A549 (cell line): ENCODE measurements at regions of chr2 and their contacts with region 1.

Region 1: GRCh38 chr2:110157153-110157793 is 41.7 kb upstream of the MALL start:
- DNase-seq: peak; percentile 42 to 80
- ATAC-seq: peak; percentile 87 to 96
- H3K4me3 ChIP-seq: no peak overlapping the region
- H3K27ac ChIP-seq: peak overlapping the region; percentile 41 to 74; a peak in 5 of 6 replicates
- H3K4me1 ChIP-seq: peaks cover 5% of the 10 kb centered on the region; the same call in 1 of the 3 replicates
- CTCF ChIP-seq: peak; percentile 94
- EP300 ChIP-seq: no peak
- POLR2A ChIP-seq: no peak
- RAD21 ChIP-seq: peak; percentile 96 to 97

Region 2: DNA sequence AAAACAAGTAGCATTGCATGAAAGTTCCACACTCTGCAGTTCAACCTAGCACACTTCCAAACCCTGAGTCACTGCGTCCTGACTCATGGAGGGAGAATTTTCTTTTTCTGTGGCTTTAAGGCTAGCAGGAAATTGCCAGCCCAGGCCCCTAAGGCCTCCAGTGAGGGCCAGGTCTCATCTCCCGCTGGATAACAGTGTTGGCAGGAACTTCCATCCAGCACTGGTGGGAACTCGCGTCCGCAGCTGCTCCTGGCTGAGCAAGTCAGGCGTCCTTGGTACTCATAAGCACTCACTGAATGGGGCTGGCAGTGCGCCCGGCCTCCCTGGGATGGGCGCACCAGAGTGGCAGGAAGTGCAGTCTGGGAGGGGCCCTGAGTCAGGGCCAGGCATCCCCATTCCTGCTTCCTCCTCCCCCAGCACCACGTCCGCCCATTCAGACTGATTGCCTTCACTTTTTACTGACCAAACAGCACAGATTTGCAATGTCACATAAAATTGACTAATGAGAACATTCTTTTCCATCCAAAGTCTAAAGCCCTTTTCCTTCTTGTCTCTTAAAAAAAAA is 55.9 kb before region 1 on chr2:
- CTCF ChIA-PET with region 1: interaction called, 15 read pairs
- POLR2A ChIA-PET with region 1: no interaction called
- DNase-seq: peak; percentile 68 to 99
- ATAC-seq: peak; percentile 79 to 82
- H3K4me3 ChIP-seq: no peak overlapping the region
- H3K27ac ChIP-seq: peak overlapping the region; percentile 98 to 100
- H3K4me1 ChIP-seq: peaks cover 82% of the 10 kb centered on the region
- CTCF ChIP-seq: no peak
- EP300 ChIP-seq: peak; percentile 84 to 94; a peak in 4 of 5 replicates
- POLR2A ChIP-seq: peak; percentile 28; the same call in 1 of the 2 replicates
- RAD21 ChIP-seq: peak; percentile 3 to 44; a peak in 3 of 5 replicates

Region 3: DNA sequence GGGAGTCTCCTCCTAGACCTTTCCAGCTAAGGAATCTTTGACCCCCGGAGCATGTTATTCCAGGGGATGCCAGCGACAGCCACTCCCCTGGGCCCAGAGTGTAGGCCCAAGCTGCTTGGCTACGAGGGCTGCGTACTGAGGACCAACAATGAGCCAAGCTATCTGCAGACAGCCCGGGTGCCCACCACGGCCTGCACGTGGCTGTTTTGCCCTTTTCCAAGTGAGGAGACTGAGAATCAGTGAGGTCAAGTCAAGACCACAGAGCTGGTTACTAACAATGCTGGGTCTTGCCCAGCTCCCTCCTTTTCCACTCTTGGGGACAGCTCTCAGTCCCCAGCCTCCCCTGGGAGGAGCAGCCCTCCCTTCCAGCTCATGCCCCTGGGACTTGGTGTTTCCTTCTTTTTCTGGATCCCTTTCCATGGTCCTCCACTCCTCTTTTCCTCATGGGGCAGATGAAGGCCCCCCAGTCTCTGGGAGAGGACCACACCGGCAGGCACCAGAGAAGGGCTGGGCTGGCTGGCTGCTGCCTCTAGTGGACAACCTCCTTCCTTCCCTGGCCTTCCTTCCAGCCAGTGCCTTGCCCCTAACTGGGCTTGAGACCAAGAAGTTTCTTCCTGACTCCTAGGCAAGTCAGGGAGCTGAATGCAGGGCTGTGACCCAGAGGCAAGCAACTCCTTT is 41.1 kb before region 1 on chr2:
- CTCF ChIA-PET with region 1: interaction called, 28 read pairs
- POLR2A ChIA-PET with region 1: no interaction called
- DNase-seq: peak; percentile 73 to 83
- ATAC-seq: peak; percentile 73 to 83
- H3K4me3 ChIP-seq: peak overlapping the region; percentile 90
- H3K27ac ChIP-seq: peak overlapping the region; percentile 96
- H3K4me1 ChIP-seq: peaks cover 17% of the 10 kb centered on the region
- CTCF ChIP-seq: peak; percentile 65
- EP300 ChIP-seq: no peak
- POLR2A ChIP-seq: no peak
- RAD21 ChIP-seq: peak; percentile 58 to 64

Region 4: GRCh38 chr2:110143982-110144381 is 13.3 kb before region 1 on chr2:
- CTCF ChIA-PET with region 1: interaction called, 13 read pairs
- POLR2A ChIA-PET with region 1: no interaction called
- DNase-seq: no peak
- ATAC-seq: no peak
- H3K4me3 ChIP-seq: no peak overlapping the region
- H3K27ac ChIP-seq: 0 out of 6 replicates have a peak overlapping the region, but pooled peaks of 1 of the 2 experiments have one; percentile 8
- H3K4me1 ChIP-seq: peaks cover 9% of the 10 kb centered on the region; the same call in 2 of the 3 replicates
- CTCF ChIP-seq: no peak
- EP300 ChIP-seq: no peak
- POLR2A ChIP-seq: no peak
- RAD21 ChIP-seq: no peak

Region 5: DNA sequence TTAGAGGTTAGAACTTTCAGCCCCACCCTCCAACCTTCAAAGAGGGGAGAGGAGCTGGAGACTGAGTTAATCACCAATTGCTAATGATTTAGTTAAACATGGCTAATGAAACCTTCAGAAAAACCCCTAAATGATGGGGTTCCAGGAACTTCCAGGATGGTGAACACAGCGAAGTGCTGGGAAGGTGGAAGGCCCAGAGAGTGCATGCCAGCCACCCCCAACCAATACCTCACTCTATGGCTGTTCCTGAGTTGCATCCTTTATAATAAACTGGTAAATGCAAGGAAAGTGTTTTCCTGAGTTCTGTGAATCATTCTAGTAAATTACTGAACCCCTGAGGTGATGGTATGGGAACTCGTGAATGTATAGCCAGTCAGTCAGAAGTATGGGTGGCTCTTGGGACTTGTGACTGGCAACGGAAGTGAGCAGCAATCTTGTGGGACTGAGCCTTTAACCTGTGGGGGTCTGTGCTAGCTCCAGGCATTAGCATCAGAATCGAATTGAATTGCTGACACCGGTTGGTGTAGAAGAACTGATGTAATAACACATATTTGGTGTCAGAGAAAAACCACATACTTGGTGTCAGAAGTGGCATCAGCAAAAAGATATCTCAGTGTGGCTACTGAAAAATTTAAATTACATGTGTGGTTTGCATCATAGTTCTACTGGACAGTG is 10.2 kb after region 1 on chr2:
- CTCF ChIA-PET with region 1: interaction called, 20 read pairs
- POLR2A ChIA-PET with region 1: no interaction called
- DNase-seq: no peak
- ATAC-seq: no peak
- H3K4me3 ChIP-seq: no peak overlapping the region
- H3K27ac ChIP-seq: no peak overlapping the region
- H3K4me1 ChIP-seq: no peaks in the 10 kb centered on the region
- CTCF ChIP-seq: no peak
- EP300 ChIP-seq: no peak
- POLR2A ChIP-seq: no peak
- RAD21 ChIP-seq: no peak